Activated B cell treated with CpG ODN at 0.5 μM for 24 hours (primary cell): ENCODE measurements at regions of chr3 and their contacts with region 1.

Region 1: DNA sequence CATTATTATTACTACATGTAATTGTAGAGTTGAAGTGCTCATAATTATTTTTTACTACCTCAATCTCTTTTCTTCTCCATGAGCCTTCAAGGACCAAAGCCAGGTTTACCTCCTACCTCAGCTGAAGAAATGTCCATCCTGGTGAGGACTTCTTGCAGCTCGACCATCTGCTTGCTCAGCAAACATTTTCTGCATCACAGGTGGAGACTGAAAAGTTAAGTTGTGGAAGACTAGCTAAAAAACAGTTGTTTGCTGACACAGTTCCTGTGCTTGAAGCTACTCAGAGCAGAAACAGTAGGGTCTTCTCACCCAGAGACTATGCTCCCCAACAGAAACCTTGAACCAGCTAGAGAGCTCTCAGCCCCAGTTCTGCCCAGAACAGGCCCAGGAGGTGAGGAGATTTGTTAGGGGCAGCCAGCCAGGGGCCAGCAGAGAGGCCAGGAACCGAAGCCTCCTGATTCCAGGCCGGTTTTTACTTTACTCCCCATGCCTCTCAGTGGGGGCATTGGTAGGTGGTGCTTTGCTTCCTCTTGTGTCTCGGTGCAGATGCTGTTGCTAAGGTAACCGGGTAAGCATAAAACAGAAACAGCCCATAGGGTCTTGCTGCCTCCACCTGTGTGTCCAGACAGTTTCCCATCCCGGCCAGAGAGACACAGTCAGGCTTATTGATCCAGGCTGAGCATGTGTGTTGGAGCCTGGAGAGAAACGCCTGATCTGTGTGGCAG is 54.9 kb downstream of the CCNL1 start:
- DNase-seq: no peak
- ATAC-seq: peak; percentile 65
- H3K4me3 Mint-ChIP-seq: no peak overlapping the region
- H3K27ac Mint-ChIP-seq: peak overlapping the region; percentile 60
- H3K4me1 Mint-ChIP-seq: peaks cover 32% of the 10 kb centered on the region
- H3K27me3 Mint-ChIP-seq: no peaks in the 10 kb centered on the region
- CTCF ChIP-seq: no peak

Region 2: GRCh38 chr3:157130467-157131251 is 25.6 kb after region 1 on chr3:
- CTCF ChIA-PET with region 1: no interaction called
- POLR2A ChIA-PET with region 1: interaction called, 5 read pairs
- intact Hi-C with region 1: loop called (anchors 2 kb)
- DNase-seq: no peak
- ATAC-seq: peak; percentile 37
- H3K4me3 Mint-ChIP-seq: no peak overlapping the region
- H3K27ac Mint-ChIP-seq: no peak overlapping the region
- H3K4me1 Mint-ChIP-seq: peaks cover 23% of the 10 kb centered on the region
- H3K27me3 Mint-ChIP-seq: no peaks in the 10 kb centered on the region
- CTCF ChIP-seq: no peak